ENCODE measurements at regions of chr2 and their contacts with region 1.

Region 1: GRCh38 chr2:192162392-192163042 is 32.2 kb downstream of the TMEFF2 start:
- DNase-seq: peak; percentile 31 to 40
- H3K4me3 ChIP-seq: no peak overlapping the region; the same call in 1 of the 2 replicates
- H3K27ac ChIP-seq: no peak overlapping the region
- H3K4me1 ChIP-seq: no peaks in the 10 kb centered on the region
- H3K27me3 ChIP-seq: no peaks in the 10 kb centered on the region
- CTCF ChIP-seq: peak; percentile 92

Region 2: GRCh38 chr2:191555092-191555742 is 607.3 kb before region 1 on chr2:
- CTCF ChIA-PET with region 1: no interaction called
- POLR2A ChIA-PET with region 1: interaction called, 8 read pairs
- intact Hi-C with region 1: loop called (anchors 1 kb)
- DNase-seq: peak; percentile 58 to 65
- H3K4me3 ChIP-seq: peak overlapping the region; percentile 26; the same call in 1 of the 2 replicates
- H3K27ac ChIP-seq: no peak overlapping the region
- H3K4me1 ChIP-seq: peaks cover 4% of the 10 kb centered on the region
- H3K27me3 ChIP-seq: no peaks in the 10 kb centered on the region
- CTCF ChIP-seq: peak; percentile 78

Region 3: DNA sequence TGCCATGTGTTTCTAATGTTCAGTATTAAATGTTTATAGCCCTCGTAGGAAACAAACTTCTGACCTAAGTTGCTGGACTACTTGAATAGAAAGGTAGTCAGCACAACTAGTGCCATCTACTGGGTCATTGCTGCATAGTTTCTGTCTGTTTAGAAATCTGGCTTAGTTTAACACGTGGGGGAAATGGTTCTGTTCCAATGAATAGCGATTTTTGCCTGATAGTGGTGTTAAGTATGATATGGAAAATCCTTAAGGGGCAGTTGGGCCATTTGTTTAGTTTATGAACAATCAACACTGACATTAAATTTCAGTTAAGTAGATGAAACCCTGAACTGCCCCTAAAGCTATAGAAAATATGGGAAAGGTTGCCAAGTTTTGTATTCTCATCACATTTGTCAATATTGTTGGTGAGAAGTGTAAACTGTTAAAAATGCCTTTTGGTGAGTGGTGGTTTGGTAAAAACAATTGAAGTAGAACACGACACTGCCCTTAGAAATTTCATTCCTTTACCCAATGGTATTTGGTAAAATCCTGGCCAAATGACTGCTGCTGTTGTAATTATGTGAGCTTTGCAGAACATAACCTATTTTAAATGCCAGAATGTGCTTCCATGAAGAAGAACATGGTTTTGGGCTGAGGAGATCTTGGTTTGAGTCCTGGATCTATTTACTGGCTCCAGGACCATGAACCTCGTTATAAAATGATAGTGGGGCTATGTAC is 471.3 kb before region 1 on chr2:
- CTCF ChIA-PET with region 1: no interaction called
- POLR2A ChIA-PET with region 1: no interaction called
- intact Hi-C with region 1: loop called (anchors 10 kb)
- DNase-seq: peak in 1 of 2 experiments; percentile 71
- H3K4me3 ChIP-seq: no peak overlapping the region
- H3K27ac ChIP-seq: peak overlapping the region; percentile 51
- H3K4me1 ChIP-seq: peaks cover 56% of the 10 kb centered on the region
- H3K27me3 ChIP-seq: no peaks in the 10 kb centered on the region
- CTCF ChIP-seq: peak; percentile 67

Region 4: GRCh38 chr2:191811807-191812602 is 350.5 kb before region 1 on chr2:
- CTCF ChIA-PET with region 1: interaction called, 37 read pairs
- POLR2A ChIA-PET with region 1: no interaction called
- intact Hi-C with region 1: loop called (anchors 1 kb)
- DNase-seq: peak; percentile 39 to 43
- H3K4me3 ChIP-seq: no peak overlapping the region
- H3K27ac ChIP-seq: no peak overlapping the region
- H3K4me1 ChIP-seq: no peaks in the 10 kb centered on the region
- H3K27me3 ChIP-seq: no peaks in the 10 kb centered on the region
- CTCF ChIP-seq: peak; percentile 80

Region 5: GRCh38 chr2:191824398-191824797 is 338.1 kb before region 1 on chr2:
- CTCF ChIA-PET with region 1: no interaction called
- POLR2A ChIA-PET with region 1: no interaction called
- intact Hi-C with region 1: no loop called
- DNase-seq: no peak
- H3K4me3 ChIP-seq: no peak overlapping the region
- H3K27ac ChIP-seq: no peak overlapping the region
- H3K4me1 ChIP-seq: no peaks in the 10 kb centered on the region
- H3K27me3 ChIP-seq: no peaks in the 10 kb centered on the region
- CTCF ChIP-seq: no peak

Measured in PC-9 (cell line).